HepG2 (cell line): ENCODE measurements at regions of chr6 and their contacts with region 1.

Region 1: GRCh38 chr6:33014841-33015634 is 5.6 kb upstream of the HLA-DOA start:
- DNase-seq: peak; percentile 77
- ATAC-seq: peak; percentile 78
- H3K4me3 ChIP-seq: no peak overlapping the region
- H3K27ac ChIP-seq: no peak overlapping the region
- H3K4me1 ChIP-seq: no peaks in the 10 kb centered on the region
- H3K27me3 ChIP-seq: peaks cover 3 to 46% of the 10 kb centered on the region in 2 experiments; a peak in 3 of 5 replicates
- CTCF ChIP-seq: peak; percentile 80
- EP300 ChIP-seq: no peak
- POLR2A ChIP-seq: no peak
- RAD21 ChIP-seq: peak; percentile 65; the same call in 1 of the 2 replicates

Region 2: DNA sequence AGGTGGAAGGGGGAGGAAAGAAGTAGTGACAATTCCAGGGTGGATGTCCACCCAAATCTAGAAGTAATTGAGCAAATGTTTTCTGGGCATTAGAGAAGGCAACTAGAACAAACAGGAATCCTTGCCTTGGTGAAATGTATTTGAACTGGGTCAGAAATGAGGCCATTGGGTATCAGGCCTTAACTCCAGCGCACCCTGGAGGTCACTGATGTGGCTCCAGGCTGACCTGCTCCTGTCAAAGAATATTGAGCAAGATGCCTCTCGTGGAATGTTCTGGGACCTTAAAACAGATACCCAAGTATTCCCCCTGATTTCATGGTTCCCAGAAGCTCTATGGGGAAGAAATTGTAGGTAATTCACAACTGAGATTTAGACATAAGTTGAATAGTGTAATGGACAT is 67.7 kb after region 1 on chr6:
- CTCF ChIA-PET with region 1: interaction called, 8 read pairs
- POLR2A ChIA-PET with region 1: no interaction called
- in situ Hi-C with region 1: loop called (anchors 5 kb)
- intact Hi-C with region 1: loop called (anchors 2 kb)
- DNase-seq: peak; percentile 55
- ATAC-seq: peak; percentile 88
- H3K4me3 ChIP-seq: no peak overlapping the region
- H3K27ac ChIP-seq: no peak overlapping the region
- H3K4me1 ChIP-seq: no peaks in the 10 kb centered on the region
- H3K27me3 ChIP-seq: peaks cover 2 to 52% of the 10 kb centered on the region in 2 experiments; a peak in 4 of 5 replicates
- CTCF ChIP-seq: peak; percentile 59
- EP300 ChIP-seq: no peak
- POLR2A ChIP-seq: no peak
- RAD21 ChIP-seq: peak; percentile 21; the same call in 1 of the 2 replicates

Region 3: DNA sequence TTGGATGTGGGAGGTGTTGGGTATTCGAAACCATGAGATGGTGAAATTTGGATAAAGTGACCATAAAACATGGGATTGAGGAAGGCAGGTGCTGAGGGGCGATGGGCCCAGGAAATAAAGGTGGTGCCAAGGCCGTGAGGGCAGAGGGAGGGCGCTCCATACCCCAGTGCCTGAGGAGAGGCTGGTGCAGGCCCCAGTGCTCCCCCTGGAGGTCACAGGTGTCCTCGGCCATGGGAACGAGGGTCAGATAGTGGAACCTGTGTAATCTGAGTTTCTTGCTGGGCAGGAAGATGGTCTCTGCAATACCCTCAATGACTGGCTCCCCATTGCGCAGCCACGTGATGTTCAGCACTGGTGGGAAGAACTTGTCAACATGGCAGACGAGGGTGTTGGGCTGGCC is 76.9 kb after region 1 on chr6:
- CTCF ChIA-PET with region 1: interaction called, 9 read pairs
- POLR2A ChIA-PET with region 1: no interaction called
- in situ Hi-C with region 1: no loop called
- intact Hi-C with region 1: loop called (anchors 1 kb)
- DNase-seq: peak; percentile 30
- ATAC-seq: peak; percentile 96
- H3K4me3 ChIP-seq: no peak overlapping the region
- H3K27ac ChIP-seq: no peak overlapping the region
- H3K4me1 ChIP-seq: no peaks in the 10 kb centered on the region
- H3K27me3 ChIP-seq: peaks cover 1 to 24% of the 10 kb centered on the region in 2 experiments; a peak in 2 of 5 replicates
- CTCF ChIP-seq: peak; percentile 73
- EP300 ChIP-seq: no peak
- POLR2A ChIP-seq: no peak
- RAD21 ChIP-seq: no peak

Region 4: DNA sequence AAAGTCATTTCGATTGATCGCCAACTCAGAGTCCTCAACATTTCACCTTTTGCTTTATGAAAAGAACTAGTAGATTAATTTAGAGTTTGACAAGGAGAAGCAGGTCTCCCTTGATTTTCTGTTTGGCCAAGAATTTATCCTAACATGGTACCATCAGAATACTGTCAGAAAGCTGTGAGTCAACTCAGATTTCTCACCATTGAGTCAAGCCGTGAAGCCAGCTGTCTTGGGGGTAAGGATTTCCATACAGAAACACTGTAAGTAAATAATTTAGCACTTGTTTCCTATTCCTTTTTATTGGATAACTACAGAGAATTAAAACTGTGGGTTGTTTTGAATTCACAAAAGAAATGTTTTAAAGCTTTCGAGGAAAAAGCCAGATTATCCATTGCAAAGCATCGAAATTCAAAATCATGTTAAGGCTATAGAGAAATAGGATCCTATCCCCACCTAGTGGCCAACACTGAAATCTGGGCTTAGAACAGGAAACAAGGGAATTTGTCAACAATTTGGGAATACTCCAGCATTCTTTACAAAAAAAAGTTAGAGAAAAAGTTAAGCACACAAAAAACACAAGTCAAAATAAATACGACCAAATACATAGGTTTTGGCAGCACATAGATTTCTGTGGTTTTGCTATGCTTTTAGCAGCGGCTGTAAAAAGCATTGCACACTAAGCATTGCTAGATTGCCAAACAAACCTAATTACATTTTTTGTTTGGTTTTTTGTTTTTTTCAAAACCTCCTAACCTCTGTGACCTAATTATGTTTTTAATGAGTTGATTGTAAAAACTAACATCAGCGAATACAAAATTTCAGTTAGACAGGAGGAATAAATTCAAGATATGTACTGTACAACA is 133.0 kb after region 1 on chr6:
- CTCF ChIA-PET with region 1: interaction called, 11 read pairs
- POLR2A ChIA-PET with region 1: no interaction called
- in situ Hi-C with region 1: no loop called
- intact Hi-C with region 1: loop called (anchors 1 kb)
- DNase-seq: peak; percentile 51
- ATAC-seq: peak; percentile 67; the same call in 1 of the 3 replicates
- H3K4me3 ChIP-seq: no peak overlapping the region
- H3K27ac ChIP-seq: no peak overlapping the region
- H3K4me1 ChIP-seq: no peaks in the 10 kb centered on the region
- H3K27me3 ChIP-seq: peaks cover 1 to 6% of the 10 kb centered on the region in 2 experiments; a peak in 1 of 5 replicates
- CTCF ChIP-seq: peak; percentile 79
- EP300 ChIP-seq: no peak
- POLR2A ChIP-seq: no peak
- RAD21 ChIP-seq: peak; percentile 39; the same call in 1 of the 2 replicates

Region 5: DNA sequence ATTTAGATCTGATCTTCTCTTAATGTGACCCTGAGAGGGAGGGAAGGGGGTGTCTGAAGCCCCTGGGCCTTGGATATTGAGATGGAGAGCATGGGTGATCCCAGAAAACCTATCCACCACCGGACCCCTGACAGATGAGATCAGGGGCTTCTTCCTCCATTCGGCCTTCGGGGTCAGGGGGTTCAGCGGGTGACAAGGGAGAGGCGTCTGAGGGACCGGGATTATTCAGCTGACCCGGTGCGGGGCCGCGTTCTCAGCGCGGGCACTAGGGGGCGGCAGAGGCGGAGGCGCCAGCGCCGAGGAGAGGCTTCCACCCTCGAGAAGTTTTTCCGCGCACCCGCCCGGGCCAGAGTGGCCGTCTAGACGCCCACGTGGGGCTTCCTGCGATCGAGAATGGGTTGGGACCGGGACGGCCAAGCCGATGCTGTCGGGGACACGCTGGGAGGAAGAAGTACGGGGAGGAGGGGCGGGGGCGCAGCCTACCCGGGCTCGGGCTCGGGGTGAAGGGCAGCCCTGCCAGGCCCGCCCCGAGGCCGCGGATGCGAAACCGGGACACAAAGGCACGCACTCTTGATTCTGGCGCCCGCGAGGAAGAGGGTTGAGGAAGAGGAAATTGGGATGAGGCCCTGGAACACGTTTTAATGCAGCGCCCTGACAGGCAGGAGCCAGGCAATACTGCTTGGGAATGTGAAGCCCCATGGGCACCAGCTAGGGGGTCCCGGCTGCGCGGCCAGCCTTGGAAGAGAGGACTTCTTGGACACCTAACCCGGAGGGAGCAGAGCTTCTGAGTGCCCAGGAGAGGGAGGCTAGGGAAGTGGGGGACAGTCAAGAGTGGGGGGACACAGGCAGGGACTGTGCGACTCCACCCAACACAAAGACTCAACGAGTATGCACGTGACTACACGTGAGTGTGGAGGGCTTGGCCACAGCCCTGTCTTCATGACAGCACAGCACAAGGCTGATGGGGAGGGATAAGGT is 146.6 kb after region 1 on chr6:
- CTCF ChIA-PET with region 1: no interaction called
- POLR2A ChIA-PET with region 1: no interaction called
- in situ Hi-C with region 1: loop called (anchors 10 kb)
- intact Hi-C with region 1: no loop called
- DNase-seq: peak; percentile 23
- ATAC-seq: peak; percentile 84
- H3K4me3 ChIP-seq: peak overlapping the region; percentile 49 to 74 (median 56)
- H3K27ac ChIP-seq: no peak overlapping the region
- H3K4me1 ChIP-seq: peaks cover 54% of the 10 kb centered on the region
- H3K27me3 ChIP-seq: peaks cover 6 to 20% of the 10 kb centered on the region in 2 experiments; a peak in 4 of 5 replicates
- CTCF ChIP-seq: peak; percentile 96
- EP300 ChIP-seq: no peak
- POLR2A ChIP-seq: no peak
- RAD21 ChIP-seq: peak; percentile 83

Region 6: DNA sequence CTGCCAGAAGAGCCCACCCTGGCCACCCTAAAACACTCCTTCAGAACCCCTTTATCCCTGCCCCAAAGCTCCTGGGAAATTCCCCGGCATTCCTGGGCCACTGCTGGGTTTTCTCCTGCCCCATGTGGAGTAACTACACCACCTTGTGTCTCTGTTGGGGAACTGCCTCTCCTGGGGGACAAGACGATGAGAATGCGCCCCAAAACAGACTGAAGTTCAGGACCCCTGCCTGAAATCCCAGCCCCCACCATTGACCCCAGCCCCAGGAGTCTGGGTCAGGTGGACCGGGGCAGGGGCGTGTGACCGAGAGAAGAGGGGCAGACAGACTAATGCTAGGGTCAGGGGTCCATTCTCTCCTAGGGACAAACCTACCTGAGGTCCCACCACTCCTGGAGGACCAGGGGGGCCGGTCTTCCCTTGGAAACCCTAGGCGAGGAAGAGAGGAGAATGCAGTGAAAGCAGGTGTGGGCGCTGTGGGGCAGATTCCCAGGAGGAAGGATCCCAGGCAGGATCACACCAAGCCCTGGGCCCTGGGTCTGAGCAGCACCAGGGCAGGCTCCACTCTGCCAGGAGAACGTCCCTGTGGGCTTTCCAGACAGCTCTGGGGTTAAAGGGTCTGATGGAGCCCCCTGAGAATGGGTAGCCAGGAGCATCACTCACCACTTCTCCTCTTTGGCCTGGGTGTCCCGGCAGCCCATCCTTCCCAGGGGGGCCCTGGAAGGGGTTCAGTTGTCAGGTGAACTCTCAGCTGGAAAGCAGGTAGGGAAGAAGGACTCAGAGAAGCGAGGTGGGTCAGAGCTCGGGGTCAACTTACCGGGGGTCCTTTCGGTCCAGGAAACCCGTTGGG is 157.9 kb after region 1 on chr6:
- CTCF ChIA-PET with region 1: interaction called, 10 read pairs
- POLR2A ChIA-PET with region 1: no interaction called
- in situ Hi-C with region 1: loop called (anchors 10 kb)
- intact Hi-C with region 1: loop called (anchors 1 kb)
- DNase-seq: peak; percentile 53
- ATAC-seq: peak; percentile 65
- H3K4me3 ChIP-seq: peak overlapping the region in 1 of 3 experiments; percentile 5; a peak in 1 of 6 replicates
- H3K27ac ChIP-seq: no peak overlapping the region
- H3K4me1 ChIP-seq: peaks cover 22% of the 10 kb centered on the region
- H3K27me3 ChIP-seq: peaks cover 2 to 48% of the 10 kb centered on the region in 2 experiments; a peak in 4 of 5 replicates
- CTCF ChIP-seq: peak; percentile 91
- EP300 ChIP-seq: no peak
- POLR2A ChIP-seq: no peak
- RAD21 ChIP-seq: peak; percentile 91

Region 7: DNA sequence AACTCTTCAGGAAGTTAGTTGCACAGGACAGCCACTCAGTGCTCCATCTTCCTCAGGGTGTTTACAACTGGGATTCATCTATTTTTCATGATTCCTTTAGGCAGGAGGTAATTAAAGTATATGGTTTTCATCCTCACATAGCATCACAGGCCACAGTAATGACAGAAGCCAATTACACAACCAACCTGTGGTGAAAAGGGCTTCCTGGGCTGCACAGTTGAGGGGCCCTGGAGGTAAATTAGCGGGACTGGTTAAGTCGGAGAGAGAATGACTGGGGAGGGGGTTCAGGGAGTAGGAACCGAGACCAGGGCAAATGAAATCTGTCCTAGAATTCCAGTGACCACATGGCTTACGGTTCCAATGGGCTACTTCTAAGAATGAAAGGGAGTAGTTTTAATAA is 528.1 kb after region 1 on chr6:
- CTCF ChIA-PET with region 1: no interaction called
- POLR2A ChIA-PET with region 1: no interaction called
- in situ Hi-C with region 1: no loop called
- intact Hi-C with region 1: no loop called
- DNase-seq: no peak
- ATAC-seq: no peak
- H3K4me3 ChIP-seq: no peak overlapping the region
- H3K27ac ChIP-seq: no peak overlapping the region
- H3K4me1 ChIP-seq: peaks cover 27% of the 10 kb centered on the region
- H3K27me3 ChIP-seq: no peaks in the 10 kb centered on the region; a peak in 1 of 5 replicates
- CTCF ChIP-seq: no peak
- EP300 ChIP-seq: no peak
- POLR2A ChIP-seq: no peak
- RAD21 ChIP-seq: no peak

Region 8: GRCh38 chr6:33711140-33712129 is 696.4 kb after region 1 on chr6 and contains the start of gene UQCC2:
- CTCF ChIA-PET with region 1: no interaction called
- POLR2A ChIA-PET with region 1: no interaction called
- in situ Hi-C with region 1: no loop called
- intact Hi-C with region 1: no loop called
- DNase-seq: peak; percentile 95
- ATAC-seq: peak; percentile 94
- H3K4me3 ChIP-seq: peak within 1 kb of the TSS; percentile 75 to 83 (median 75)
- H3K27ac ChIP-seq: peak within 1 kb of the TSS; percentile 93
- H3K4me1 ChIP-seq: peaks cover 63% of the 10 kb centered on the region
- H3K27me3 ChIP-seq: no peaks in the 10 kb centered on the region; a peak in 1 of 5 replicates
- CTCF ChIP-seq: peak; percentile 98
- EP300 ChIP-seq: no peak
- POLR2A ChIP-seq: peak; percentile 85 to 96
- RAD21 ChIP-seq: peak; percentile 97
- total RNA-seq, gene UQCC2: 238 and 273 TPM in 2 replicates